Posterior cingulate gyrus (tissue), 11 donors: ENCODE measurements at regions of chr1 and their contacts with region 1.

Region 1: GRCh38 chr1:107991371-107992066 is 26.5 kb upstream of the VAV3 start:
- DNase-seq: peak in 4 of 10 donors; percentile 12 to 70 (median 26)

Region 2: GRCh38 chr1:108050911-108051629 is 59.6 kb after region 1 on chr1:
- intact Hi-C with region 1: loop called (anchors 5 kb)
- DNase-seq: no peak